ENCODE measurements at regions of chr21 and their contacts with region 1.

Region 1: GRCh38 chr21:31967334-31967733 is 94.5 kb downstream of the HUNK start:
- DNase-seq: no peak
- ATAC-seq: no peak
- H3K4me3 ChIP-seq: no peak overlapping the region
- H3K4me3 Mint-ChIP-seq: no peak overlapping the region
- H3K27ac ChIP-seq: no peak overlapping the region
- H3K27ac Mint-ChIP-seq: no peak overlapping the region
- H3K4me1 ChIP-seq: no peaks in the 10 kb centered on the region
- H3K4me1 Mint-ChIP-seq: no peaks in the 10 kb centered on the region
- H3K27me3 ChIP-seq: no peaks in the 10 kb centered on the region
- H3K27me3 Mint-ChIP-seq: peaks cover 2% of the 10 kb centered on the region
- CTCF ChIP-seq: no peak

Region 2: DNA sequence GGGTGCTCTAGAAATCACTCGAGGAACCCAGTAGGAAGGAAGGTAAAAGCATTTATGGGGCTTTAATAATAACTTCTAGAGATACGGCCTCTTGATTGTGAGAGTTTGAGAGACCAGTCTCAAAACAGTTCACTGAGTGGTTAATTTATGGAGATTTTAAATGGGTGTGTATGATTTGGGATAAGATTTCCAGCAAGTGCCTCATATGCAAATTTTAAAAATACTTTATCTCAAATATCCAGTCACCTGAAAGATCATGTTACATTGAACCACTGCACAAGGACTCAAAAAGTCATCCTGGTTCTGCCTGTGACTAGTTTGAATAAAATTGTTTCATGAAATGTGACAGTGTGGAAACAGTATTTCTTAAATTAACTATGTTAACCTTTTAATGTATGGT is 30.0 kb before region 1 on chr21:
- CTCF ChIA-PET with region 1: no interaction called
- POLR2A ChIA-PET with region 1: no interaction called
- intact Hi-C with region 1: loop called in 1 of 2 experiments (anchors 1 kb)
- DNase-seq: no peak
- ATAC-seq: no peak
- H3K4me3 ChIP-seq: no peak overlapping the region
- H3K4me3 Mint-ChIP-seq: no peak overlapping the region
- H3K27ac ChIP-seq: no peak overlapping the region
- H3K27ac Mint-ChIP-seq: no peak overlapping the region
- H3K4me1 ChIP-seq: no peaks in the 10 kb centered on the region
- H3K4me1 Mint-ChIP-seq: peaks cover 2% of the 10 kb centered on the region
- H3K27me3 ChIP-seq: peaks cover 0 to 1% of the 10 kb centered on the region in 2 experiments
- H3K27me3 Mint-ChIP-seq: peaks cover 12% of the 10 kb centered on the region
- CTCF ChIP-seq: no peak

Measured in CD8-positive, alpha-beta T cell (primary cell).